CD4-positive, alpha-beta memory T cell (primary cell): ENCODE measurements at regions of chr1 and their contacts with region 1.

Region 1: GRCh38 chr1:61724813-61725694 is at the start of gene TM2D1:
- DNase-seq: peak; percentile 82 to 88 (median 83)
- H3K4me3 ChIP-seq: peak within 1 kb of the TSS; percentile 85 to 100
- H3K4me3 Mint-ChIP-seq: peak within 1 kb of the TSS; percentile 92 to 99 (median 96)
- H3K27ac ChIP-seq: peak within 1 kb of the TSS; percentile 88
- H3K27ac Mint-ChIP-seq: peak within 1 kb of the TSS; percentile 94 to 98 (median 98)
- H3K4me1 ChIP-seq: peaks cover 29% of the 10 kb centered on the region
- H3K4me1 Mint-ChIP-seq: peaks cover 14 to 39% (median 25%) of the 10 kb centered on the region in 4 donors
- H3K27me3 ChIP-seq: no peaks in the 10 kb centered on the region
- H3K27me3 Mint-ChIP-seq: no peaks in the 10 kb centered on the region
- total RNA-seq, gene TM2D1: 50.7 to 55.1 TPM

Region 2: GRCh38 chr1:59814180-59814900 is 1910.7 kb before region 1 on chr1:
- CTCF ChIA-PET with region 1: no interaction called
- POLR2A ChIA-PET with region 1: no interaction called
- intact Hi-C with region 1: loop called (anchors 10 kb)
- DNase-seq: peak; percentile 86 to 94 (median 92)
- H3K4me3 ChIP-seq: peak overlapping the region in 1 of 2 donors; percentile 52
- H3K4me3 Mint-ChIP-seq: peak overlapping the region in 5 of 8 donors; percentile 82 to 93 (median 88)
- H3K27ac ChIP-seq: peak overlapping the region; percentile 70
- H3K27ac Mint-ChIP-seq: peak overlapping the region in 6 of 7 donors; percentile 79 to 96 (median 91)
- H3K4me1 ChIP-seq: peaks cover 20% of the 10 kb centered on the region
- H3K4me1 Mint-ChIP-seq: peaks cover 3 to 6% (median 5%) of the 10 kb centered on the region in 4 donors
- H3K27me3 ChIP-seq: no peaks in the 10 kb centered on the region
- H3K27me3 Mint-ChIP-seq: peaks cover 10 to 14% of the 10 kb centered on the region in 2 donors

Region 3: GRCh38 chr1:61709908-61710289 is 15.2 kb before region 1 on chr1:
- CTCF ChIA-PET with region 1: no interaction called
- POLR2A ChIA-PET with region 1: no interaction called
- intact Hi-C with region 1: loop called (anchors 1 kb)
- DNase-seq: no peak
- H3K4me3 ChIP-seq: no peak overlapping the region
- H3K4me3 Mint-ChIP-seq: no peak overlapping the region
- H3K27ac ChIP-seq: no peak overlapping the region
- H3K27ac Mint-ChIP-seq: peak overlapping the region in 1 of 7 donors; percentile 59
- H3K4me1 ChIP-seq: no peaks in the 10 kb centered on the region
- H3K4me1 Mint-ChIP-seq: peaks cover 0 to 10% (median 6%) of the 10 kb centered on the region in 4 donors
- H3K27me3 ChIP-seq: no peaks in the 10 kb centered on the region
- H3K27me3 Mint-ChIP-seq: no peaks in the 10 kb centered on the region

Region 4: GRCh38 chr1:61741711-61742619 is 16.9 kb after region 1 on chr1 and contains the start of gene PATJ:
- CTCF ChIA-PET with region 1: interaction called, 3 read pairs
- POLR2A ChIA-PET with region 1: interaction called, 16 read pairs
- intact Hi-C with region 1: loop called (anchors 1 kb)
- DNase-seq: peak; percentile 74 to 80 (median 76)
- H3K4me3 ChIP-seq: peak within 1 kb of the TSS; percentile 69 to 83
- H3K4me3 Mint-ChIP-seq: peak within 1 kb of the TSS; percentile 94 to 98 (median 96)
- H3K27ac ChIP-seq: peak within 1 kb of the TSS; percentile 59
- H3K27ac Mint-ChIP-seq: peak within 1 kb of the TSS; percentile 92 to 97 (median 95)
- H3K4me1 ChIP-seq: peaks cover 25% of the 10 kb centered on the region
- H3K4me1 Mint-ChIP-seq: peaks cover 24 to 37% (median 29%) of the 10 kb centered on the region in 4 donors
- H3K27me3 ChIP-seq: no peaks in the 10 kb centered on the region
- H3K27me3 Mint-ChIP-seq: no peaks in the 10 kb centered on the region
- total RNA-seq, gene PATJ: 38.9 to 49.0 TPM

Region 5: DNA sequence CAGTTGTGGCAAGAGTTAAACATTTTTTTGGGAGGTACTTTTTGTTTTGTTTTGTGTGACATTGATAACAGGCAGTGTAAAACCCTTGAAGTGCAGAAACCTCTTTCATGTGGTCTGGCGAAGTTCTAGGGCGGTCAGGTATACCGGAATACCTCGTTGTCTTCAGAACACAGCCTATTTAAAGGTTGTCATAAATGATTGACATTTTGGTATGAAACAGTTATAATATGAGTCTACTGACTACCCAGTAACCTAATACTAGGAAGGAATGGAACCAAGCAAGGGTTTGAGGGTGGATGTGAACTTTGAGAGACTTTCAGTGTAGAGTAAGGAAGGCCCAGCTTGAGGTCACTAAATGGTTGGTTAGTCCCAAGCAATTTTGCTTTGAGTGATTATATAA is 57.7 kb after region 1 on chr1:
- CTCF ChIA-PET with region 1: no interaction called
- POLR2A ChIA-PET with region 1: interaction called, 7 read pairs
- intact Hi-C with region 1: loop called (anchors 1 kb)
- DNase-seq: peak; percentile 84 to 91 (median 87)
- H3K4me3 ChIP-seq: peak overlapping the region in 1 of 2 donors; percentile 4
- H3K4me3 Mint-ChIP-seq: peak overlapping the region; percentile 78 to 91 (median 84)
- H3K27ac ChIP-seq: peak overlapping the region; percentile 34
- H3K27ac Mint-ChIP-seq: peak overlapping the region; percentile 86 to 96 (median 92)
- H3K4me1 ChIP-seq: peaks cover 51% of the 10 kb centered on the region
- H3K4me1 Mint-ChIP-seq: peaks cover 39 to 67% (median 54%) of the 10 kb centered on the region in 4 donors
- H3K27me3 ChIP-seq: no peaks in the 10 kb centered on the region
- H3K27me3 Mint-ChIP-seq: no peaks in the 10 kb centered on the region